PC-3 (cell line): ENCODE measurements at regions of chr12 and their contacts with region 1.

Region 1: DNA sequence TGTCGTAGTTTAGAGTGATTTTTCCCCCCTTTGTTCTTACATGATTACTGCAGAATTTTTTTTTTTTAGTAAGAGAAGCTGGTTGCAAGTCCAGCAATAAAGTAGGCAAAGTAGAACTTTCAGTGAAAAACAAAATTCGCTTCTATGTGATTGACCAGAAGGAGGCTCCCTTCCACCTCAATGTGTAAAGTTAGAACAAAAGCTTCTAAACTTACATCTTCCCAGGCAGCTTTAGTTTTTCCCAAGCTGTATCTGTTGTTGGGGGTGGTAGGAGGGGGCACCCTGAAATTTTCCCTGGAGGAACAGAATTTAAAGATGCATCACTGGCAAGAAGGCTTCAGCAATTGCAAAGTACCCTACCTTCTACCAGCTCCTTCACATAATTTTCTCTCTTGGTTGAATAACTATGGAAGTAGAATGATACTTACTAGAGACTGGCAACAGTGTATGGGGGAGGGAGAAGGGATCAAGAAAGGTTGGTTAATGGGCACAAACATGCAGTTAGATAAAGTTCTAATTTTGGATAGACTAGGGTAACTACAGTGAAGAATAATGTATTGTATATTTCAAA is 87.3 kb upstream of the E2F7 start:
- DNase-seq: peak; percentile 63
- ATAC-seq: 0 out of 2 replicates have a peak, but pooled peaks have one; percentile 16
- H3K4me3 ChIP-seq: no peak overlapping the region
- H3K27ac ChIP-seq: no peak overlapping the region
- H3K4me1 ChIP-seq: peaks cover 15% of the 10 kb centered on the region
- H3K27me3 ChIP-seq: no peaks in the 10 kb centered on the region
- CTCF ChIP-seq: peak; percentile 74

Region 2: DNA sequence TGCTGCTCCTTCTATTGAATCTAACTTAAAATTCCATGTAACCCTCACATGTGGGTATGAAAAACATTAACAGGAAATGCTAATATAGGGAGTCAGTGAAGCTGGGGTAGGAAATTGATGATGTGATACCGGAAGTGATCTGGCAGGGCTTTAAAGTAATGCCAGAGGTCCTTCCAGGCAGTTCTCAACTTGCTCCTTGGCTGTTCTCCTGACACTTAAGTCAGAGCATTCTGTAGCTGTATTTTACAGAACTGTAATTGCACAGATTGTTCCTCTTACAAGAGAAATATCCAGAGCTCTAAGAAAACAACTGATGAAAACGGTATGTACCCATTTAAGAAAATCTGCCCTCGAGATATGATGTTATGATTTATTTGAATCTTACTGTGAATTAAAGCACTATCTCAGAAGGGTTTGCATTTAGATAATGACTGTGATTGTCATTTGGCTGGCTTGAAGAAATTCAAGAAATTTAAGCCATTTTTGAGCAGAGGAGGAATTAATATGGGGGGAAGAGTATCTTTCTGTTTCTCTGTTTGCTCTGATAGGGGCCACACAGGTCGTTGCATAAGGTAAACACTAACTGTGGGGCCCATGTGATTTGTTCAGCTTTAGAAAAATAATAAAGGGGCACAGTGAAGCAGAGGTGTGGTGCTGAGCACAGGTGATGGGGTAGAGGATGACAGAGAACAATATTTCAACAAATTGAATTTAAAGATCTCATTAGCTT is 892.9 kb before region 1 on chr12:
- CTCF ChIA-PET with region 1: no interaction called
- POLR2A ChIA-PET with region 1: no interaction called
- intact Hi-C with region 1: no loop called
- DNase-seq: peak; percentile 48
- ATAC-seq: peak; percentile 67
- H3K4me3 ChIP-seq: no peak overlapping the region
- H3K27ac ChIP-seq: no peak overlapping the region
- H3K4me1 ChIP-seq: peaks cover 14% of the 10 kb centered on the region
- H3K27me3 ChIP-seq: no peaks in the 10 kb centered on the region
- CTCF ChIP-seq: no peak

Region 3: DNA sequence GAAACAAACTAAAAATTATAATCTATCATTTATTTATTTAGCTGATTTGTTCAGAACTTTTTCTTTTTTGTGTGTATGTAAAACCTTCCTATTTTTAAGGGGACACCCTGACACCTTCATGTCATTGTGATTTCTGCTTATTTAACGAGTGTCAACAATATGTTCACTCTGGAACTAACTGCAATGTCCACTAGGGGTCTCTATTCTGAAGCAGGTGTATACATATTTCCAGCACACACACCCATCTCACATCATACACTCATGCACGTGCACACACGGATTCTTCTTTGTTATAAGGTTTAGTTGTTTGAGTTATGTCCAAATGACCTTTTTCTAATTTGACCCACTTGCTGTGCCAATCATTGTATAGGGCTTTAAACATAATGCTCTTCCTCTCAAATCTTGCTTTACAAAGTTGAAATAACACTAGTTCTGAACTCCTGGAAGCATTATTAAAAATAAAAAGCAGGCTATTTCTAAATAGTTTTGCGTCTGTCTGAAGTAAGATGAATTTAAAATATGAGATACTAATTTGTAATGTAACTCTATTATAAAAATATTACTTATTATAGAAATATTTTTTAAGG is 102.8 kb before region 1 on chr12:
- CTCF ChIA-PET with region 1: no interaction called
- POLR2A ChIA-PET with region 1: no interaction called
- intact Hi-C with region 1: loop called (anchors 1 kb)
- DNase-seq: peak; percentile 83
- ATAC-seq: peak; percentile 95
- H3K4me3 ChIP-seq: no peak overlapping the region
- H3K27ac ChIP-seq: no peak overlapping the region
- H3K4me1 ChIP-seq: no peaks in the 10 kb centered on the region
- H3K27me3 ChIP-seq: no peaks in the 10 kb centered on the region
- CTCF ChIP-seq: peak; percentile 89

Region 4: GRCh38 chr12:77122236-77122635 is 30.5 kb before region 1 on chr12:
- CTCF ChIA-PET with region 1: no interaction called
- POLR2A ChIA-PET with region 1: no interaction called
- intact Hi-C with region 1: loop called (anchors 1 kb)
- DNase-seq: peak; percentile 90
- ATAC-seq: peak; percentile 86
- H3K4me3 ChIP-seq: peak overlapping the region; percentile 16; the same call in 1 of the 2 replicates
- H3K27ac ChIP-seq: peak overlapping the region; percentile 94
- H3K4me1 ChIP-seq: peaks cover 44% of the 10 kb centered on the region
- H3K27me3 ChIP-seq: no peaks in the 10 kb centered on the region
- CTCF ChIP-seq: no peak

Region 5: GRCh38 chr12:77299910-77300669 is 147.4 kb after region 1 on chr12:
- CTCF ChIA-PET with region 1: no interaction called
- POLR2A ChIA-PET with region 1: no interaction called
- intact Hi-C with region 1: loop called (anchors 2 kb)
- DNase-seq: peak; percentile 93
- ATAC-seq: peak; percentile 97
- H3K4me3 ChIP-seq: peak overlapping the region; percentile 10; the same call in 1 of the 2 replicates
- H3K27ac ChIP-seq: peak overlapping the region; percentile 71
- H3K4me1 ChIP-seq: peaks cover 25% of the 10 kb centered on the region
- H3K27me3 ChIP-seq: no peaks in the 10 kb centered on the region
- CTCF ChIP-seq: no peak

Region 6: GRCh38 chr12:77382096-77382742 is 229.5 kb after region 1 on chr12:
- CTCF ChIA-PET with region 1: no interaction called
- POLR2A ChIA-PET with region 1: no interaction called
- intact Hi-C with region 1: loop called (anchors 2 kb)
- DNase-seq: no peak
- ATAC-seq: no peak
- H3K4me3 ChIP-seq: no peak overlapping the region
- H3K27ac ChIP-seq: no peak overlapping the region
- H3K4me1 ChIP-seq: no peaks in the 10 kb centered on the region
- H3K27me3 ChIP-seq: peaks cover 12% of the 10 kb centered on the region; the same call in 1 of the 2 replicates
- CTCF ChIP-seq: peak; percentile 37